Vagina (tissue), 2 donors: ENCODE measurements at regions of chr20 and their contacts with region 1.

Region 1: DNA sequence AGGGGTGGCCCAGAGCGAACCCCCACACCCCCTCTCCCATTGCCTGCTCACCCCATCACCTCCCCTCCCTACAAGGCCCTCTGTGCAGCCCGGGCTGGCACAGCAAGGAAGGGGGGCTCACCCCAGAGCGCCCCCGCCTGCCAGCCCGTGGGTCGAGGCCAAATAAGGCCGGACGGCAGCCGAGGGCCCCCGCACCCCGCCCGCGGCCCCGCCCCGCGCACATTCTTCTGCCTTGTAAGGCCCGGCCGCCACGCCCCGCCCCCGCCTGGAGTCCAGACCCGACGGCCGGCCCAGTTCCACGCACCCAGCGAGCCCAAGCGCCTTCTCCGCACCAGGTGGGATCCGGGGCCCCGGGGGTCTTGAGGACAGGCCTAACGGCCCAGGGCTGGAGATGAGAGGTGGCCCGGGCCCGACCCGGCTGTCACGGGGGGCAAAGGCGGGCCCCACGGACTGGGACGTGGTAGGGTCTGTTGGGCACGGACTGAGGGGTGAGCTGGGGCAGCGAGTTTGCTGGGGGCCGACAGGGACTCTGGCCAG is at the start of gene MYL9:
- DNase-seq: no peak
- H3K4me3 ChIP-seq: peak within 1 kb of the TSS; percentile 62 to 77
- H3K27ac ChIP-seq: peak within 1 kb of the TSS; percentile 94
- H3K4me1 ChIP-seq: peaks cover 34% of the 10 kb centered on the region
- H3K27me3 ChIP-seq: no peaks in the 10 kb centered on the region
- CTCF ChIP-seq: no peak
- POLR2A ChIP-seq: peak in 1 of 2 donors; percentile 50
- total RNA-seq, gene MYL9: 246 TPM

Region 2: GRCh38 chr20:36460648-36461599 is 80.4 kb before region 1 on chr20:
- intact Hi-C with region 1: loop called (anchors 5 kb)
- DNase-seq: peak in 1 of 2 donors; percentile 95
- H3K4me3 ChIP-seq: peak overlapping the region; percentile 69 to 78
- H3K27ac ChIP-seq: peak overlapping the region; percentile 99
- H3K4me1 ChIP-seq: peaks cover 49% of the 10 kb centered on the region
- H3K27me3 ChIP-seq: no peaks in the 10 kb centered on the region
- CTCF ChIP-seq: no peak
- POLR2A ChIP-seq: peak; percentile 96 to 98